Activated CD4-positive, alpha-beta memory T cell treated with anti-CD3 and anti-CD28 coated beads for 36 hours (primary cell): ENCODE measurements at regions of chr15 and their contacts with region 1.

Region 1: GRCh38 chr15:57866149-57866736 is 159.7 kb downstream of the POLR2M start:
- DNase-seq: peak; percentile 68
- H3K4me3 Mint-ChIP-seq: no peak overlapping the region
- H3K27ac Mint-ChIP-seq: no peak overlapping the region
- H3K4me1 Mint-ChIP-seq: no peaks in the 10 kb centered on the region
- H3K27me3 Mint-ChIP-seq: peaks cover 35% of the 10 kb centered on the region

Region 2: GRCh38 chr15:57640935-57641682 is 225.1 kb before region 1 on chr15:
- CTCF ChIA-PET with region 1: interaction called, 8 read pairs
- POLR2A ChIA-PET with region 1: no interaction called
- intact Hi-C with region 1: loop called (anchors 10 kb)
- DNase-seq: peak; percentile 29
- H3K4me3 Mint-ChIP-seq: no peak overlapping the region
- H3K27ac Mint-ChIP-seq: no peak overlapping the region
- H3K4me1 Mint-ChIP-seq: peaks cover 6% of the 10 kb centered on the region
- H3K27me3 Mint-ChIP-seq: peaks cover 3% of the 10 kb centered on the region

Region 3: DNA sequence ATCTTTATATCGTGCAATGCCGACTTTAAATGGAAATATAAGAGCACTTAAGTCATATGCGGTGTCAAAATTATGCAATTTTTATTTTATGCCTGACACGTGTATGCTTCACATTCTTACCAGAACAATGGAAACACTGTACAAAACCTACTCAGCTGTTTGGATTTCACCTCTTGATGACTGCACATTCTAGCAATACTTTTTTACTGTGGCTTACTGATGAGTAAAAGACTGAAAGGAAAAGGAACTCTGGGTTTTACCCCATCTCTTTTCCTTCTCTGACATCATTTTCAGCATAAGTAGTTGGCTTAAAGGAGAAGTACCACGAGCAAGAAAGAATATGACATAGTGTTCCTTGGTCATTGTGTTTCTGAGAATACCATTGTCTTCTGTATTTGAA is 16.9 kb before region 1 on chr15:
- CTCF ChIA-PET with region 1: interaction called, 46 read pairs
- POLR2A ChIA-PET with region 1: no interaction called
- intact Hi-C with region 1: no loop called
- DNase-seq: no peak
- H3K4me3 Mint-ChIP-seq: no peak overlapping the region
- H3K27ac Mint-ChIP-seq: no peak overlapping the region
- H3K4me1 Mint-ChIP-seq: no peaks in the 10 kb centered on the region
- H3K27me3 Mint-ChIP-seq: peaks cover 14% of the 10 kb centered on the region

Region 4: DNA sequence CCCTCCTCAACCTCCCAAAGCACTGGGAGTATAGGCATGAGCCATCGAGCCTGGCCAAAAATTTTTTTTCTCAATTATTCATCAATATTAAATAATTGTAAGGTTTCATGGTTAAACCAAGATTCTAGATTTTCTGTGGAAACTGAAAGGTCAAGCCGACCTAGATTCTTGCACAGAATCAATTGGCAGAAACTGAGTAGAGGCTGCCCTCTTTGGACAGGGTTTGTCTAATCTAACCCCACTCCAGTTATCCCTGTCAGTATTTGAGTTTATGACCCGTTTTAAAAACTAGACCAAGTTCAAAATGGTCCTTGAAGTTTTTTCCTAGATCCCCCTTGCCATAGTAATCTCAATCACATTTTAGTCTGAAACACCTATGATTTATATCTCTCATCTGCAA is 891.9 kb after region 1 on chr15:
- CTCF ChIA-PET with region 1: no interaction called
- POLR2A ChIA-PET with region 1: no interaction called
- intact Hi-C with region 1: no loop called
- DNase-seq: no peak
- H3K4me3 Mint-ChIP-seq: no peak overlapping the region
- H3K27ac Mint-ChIP-seq: no peak overlapping the region
- H3K4me1 Mint-ChIP-seq: no peaks in the 10 kb centered on the region
- H3K27me3 Mint-ChIP-seq: peaks cover 3% of the 10 kb centered on the region